Heart left ventricle (tissue), 16 donors: ENCODE measurements at regions of chr13 and their contacts with region 1.

Region 1: DNA sequence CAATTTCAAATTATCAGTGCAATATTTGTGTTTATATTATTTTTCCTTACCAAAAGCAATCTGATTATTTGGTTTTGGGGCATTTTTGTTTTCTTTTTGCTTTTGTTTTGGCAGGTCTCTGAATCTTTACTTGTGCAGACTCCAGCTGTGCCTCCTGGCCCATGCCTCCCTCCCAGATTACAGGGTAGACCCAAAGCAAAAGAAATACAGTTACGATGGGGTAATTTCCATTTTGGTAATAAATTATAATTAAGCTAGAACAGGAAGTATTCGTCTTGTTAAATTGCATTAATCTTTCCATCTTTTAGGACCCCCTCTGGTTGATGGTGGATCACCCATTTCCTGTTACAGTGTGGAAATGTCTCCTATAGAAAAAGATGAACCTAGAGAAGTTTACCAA is 29.2 kb upstream of the MLNR start:
- DNase-seq: no peak
- ATAC-seq: no peak
- H3K4me3 ChIP-seq: no peak overlapping the region
- H3K27ac ChIP-seq: no peak overlapping the region
- H3K4me1 ChIP-seq: no peaks in the 10 kb centered on the region
- H3K27me3 ChIP-seq: no peaks in the 10 kb centered on the region
- CTCF ChIP-seq: no peak
- POLR2A ChIP-seq: no peak

Region 2: DNA sequence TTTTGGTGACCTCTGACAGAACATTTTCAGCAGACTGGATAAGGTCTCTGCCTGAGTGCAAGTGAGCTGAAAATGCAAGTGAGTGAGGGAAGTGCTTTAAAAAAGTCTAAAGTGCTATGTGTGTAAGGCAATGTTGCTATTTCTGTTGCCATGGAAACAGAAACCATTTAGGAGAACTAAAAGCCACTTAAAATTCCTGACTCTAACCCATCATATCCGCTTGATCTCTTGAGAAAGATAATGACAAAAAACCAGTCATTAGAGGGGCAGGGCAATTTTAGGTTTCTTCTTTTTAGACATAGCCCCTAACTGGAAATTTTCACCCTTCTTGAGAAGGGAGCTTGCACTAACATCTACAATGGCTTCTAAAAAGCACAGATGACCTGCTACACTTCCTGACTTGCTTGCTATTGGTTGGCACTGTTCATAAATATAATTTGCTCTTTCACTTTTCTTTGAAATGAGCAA is 537.4 kb before region 1 on chr13 and contains the start of gene CYSLTR2:
- intact Hi-C with region 1: no loop called
- DNase-seq: peak in 1 of 5 donors; percentile 21
- ATAC-seq: peak in 3 of 4 donors; percentile 57 to 76 (median 57)
- H3K4me3 ChIP-seq: peak within 1 kb of the TSS in 10 of 12 donors; percentile 17 to 58 (median 48)
- H3K27ac ChIP-seq: peak within 1 kb of the TSS; percentile 26 to 86 (median 70)
- H3K4me1 ChIP-seq: peaks cover 0 to 53% (median 4%) of the 10 kb centered on the region in 12 donors
- H3K27me3 ChIP-seq: no peaks in the 10 kb centered on the region
- CTCF ChIP-seq: no peak
- POLR2A ChIP-seq: peak in 1 of 2 donors; percentile 17
- total RNA-seq, gene CYSLTR2: 3.8 to 11.5 (median 5.4) TPM

Region 3: DNA sequence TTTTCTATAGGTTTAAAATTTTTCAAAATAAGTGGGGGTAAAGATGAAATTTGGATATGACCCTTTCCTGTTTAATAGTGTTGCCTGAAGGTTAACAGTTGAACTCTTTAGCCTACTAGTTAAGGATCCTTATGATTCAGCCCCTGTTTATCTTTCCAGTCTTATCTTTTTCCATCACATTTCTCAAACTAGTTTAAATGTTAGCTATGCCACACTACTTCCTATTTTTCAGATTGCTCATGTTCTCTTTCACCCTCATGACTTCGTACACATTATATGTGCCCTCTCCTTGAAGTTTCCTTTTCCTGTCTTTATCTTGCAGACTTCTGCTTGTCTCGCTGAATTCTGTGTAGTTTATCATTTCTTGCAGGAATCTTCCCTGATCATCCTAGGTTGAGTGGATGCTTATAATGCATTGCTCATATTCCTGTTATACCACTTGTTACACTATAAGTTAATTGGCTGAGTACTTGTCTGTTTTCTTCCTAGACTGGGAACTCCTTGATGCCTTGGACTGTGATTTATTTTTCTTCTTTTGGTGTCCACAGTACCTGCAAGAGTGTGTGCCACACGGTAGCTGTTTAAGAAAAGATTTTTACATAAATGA is 128.5 kb before region 1 on chr13:
- intact Hi-C with region 1: no loop called
- DNase-seq: no peak
- ATAC-seq: no peak
- H3K4me3 ChIP-seq: no peak overlapping the region
- H3K27ac ChIP-seq: no peak overlapping the region
- H3K4me1 ChIP-seq: peaks cover 0 to 14% (median 5%) of the 10 kb centered on the region in 12 donors
- H3K27me3 ChIP-seq: no peaks in the 10 kb centered on the region
- CTCF ChIP-seq: no peak
- POLR2A ChIP-seq: no peak

Region 4: GRCh38 chr13:49146950-49147355 is 43.9 kb before region 1 on chr13:
- intact Hi-C with region 1: loop called in 1 of 10 experiments (anchors 2 kb)
- DNase-seq: no peak
- ATAC-seq: peak in 2 of 4 donors; percentile 39 to 53
- H3K4me3 ChIP-seq: peak overlapping the region in 9 of 12 donors; percentile 3 to 43 (median 20)
- H3K27ac ChIP-seq: peak overlapping the region in 8 of 12 donors; percentile 7 to 77 (median 42)
- H3K4me1 ChIP-seq: peaks cover 0 to 20% (median 4%) of the 10 kb centered on the region in 12 donors
- H3K27me3 ChIP-seq: no peaks in the 10 kb centered on the region
- CTCF ChIP-seq: no peak
- POLR2A ChIP-seq: no peak

Region 5: GRCh38 chr13:50580684-50581305 is 1389.9 kb after region 1 on chr13:
- intact Hi-C with region 1: no loop called
- DNase-seq: peak in 2 of 5 donors; percentile 34 to 39
- ATAC-seq: peak; percentile 87 to 92 (median 90)
- H3K4me3 ChIP-seq: no peak overlapping the region
- H3K27ac ChIP-seq: peak overlapping the region in 10 of 12 donors; percentile 24 to 81 (median 62)
- H3K4me1 ChIP-seq: peaks cover 0 to 35% (median 12%) of the 10 kb centered on the region in 12 donors
- H3K27me3 ChIP-seq: no peaks in the 10 kb centered on the region
- CTCF ChIP-seq: peak in 4 of 12 donors; percentile 9 to 17 (median 13)
- POLR2A ChIP-seq: no peak